CD4-positive, alpha-beta T cell (primary cell): ENCODE measurements at regions of chr18 and their contacts with region 1.

Region 1: DNA sequence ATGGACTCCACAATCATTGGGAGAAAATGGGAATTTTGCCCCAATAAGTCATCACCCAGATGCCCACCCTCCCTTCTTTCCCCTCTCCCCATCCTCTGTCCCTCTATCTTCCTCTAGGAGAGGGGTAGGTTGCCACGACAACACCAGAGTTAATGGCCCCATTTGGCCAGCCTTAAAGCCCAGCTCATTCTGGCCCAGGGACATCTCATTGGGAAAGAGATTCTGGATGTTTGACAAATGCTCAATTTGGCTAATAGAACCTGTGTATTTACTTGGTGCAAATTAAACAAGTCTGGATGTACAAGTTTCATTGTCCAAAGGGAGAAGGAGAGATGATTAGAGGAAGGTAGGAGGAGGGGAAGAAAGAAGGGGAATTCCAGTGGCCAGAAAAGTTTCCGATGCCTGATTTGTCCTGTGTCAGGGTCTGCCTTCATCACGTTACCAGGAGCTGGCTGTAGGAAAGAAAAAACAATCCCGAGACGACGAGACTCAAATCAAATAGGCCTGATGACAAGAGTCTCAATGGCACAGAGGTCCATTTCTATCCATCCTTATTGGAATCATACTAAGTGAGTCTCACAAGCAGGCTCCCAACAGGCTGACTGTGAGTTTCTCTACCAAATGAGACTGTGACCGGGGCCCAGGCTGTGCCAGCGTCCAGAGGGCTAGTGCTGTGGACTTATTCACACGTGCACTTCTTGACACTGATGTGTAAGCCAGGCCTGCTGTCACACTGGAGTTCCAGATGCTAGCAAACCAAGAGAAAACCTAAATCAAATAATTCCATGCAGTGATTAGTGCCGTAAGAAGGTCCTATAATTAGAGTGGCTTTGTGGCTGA is 265.2 kb upstream of the APCDD1 start:
- DNase-seq: no peak
- ATAC-seq: no peak
- H3K4me3 ChIP-seq: no peak overlapping the region
- H3K4me3 Mint-ChIP-seq: no peak overlapping the region
- H3K27ac ChIP-seq: no peak overlapping the region
- H3K27ac Mint-ChIP-seq: no peak overlapping the region
- H3K4me1 ChIP-seq: no peaks in the 10 kb centered on the region
- H3K4me1 Mint-ChIP-seq: no peaks in the 10 kb centered on the region
- H3K27me3 ChIP-seq: no peaks in the 10 kb centered on the region
- H3K27me3 Mint-ChIP-seq: no peaks in the 10 kb centered on the region
- CTCF ChIP-seq: no peak

Region 2: DNA sequence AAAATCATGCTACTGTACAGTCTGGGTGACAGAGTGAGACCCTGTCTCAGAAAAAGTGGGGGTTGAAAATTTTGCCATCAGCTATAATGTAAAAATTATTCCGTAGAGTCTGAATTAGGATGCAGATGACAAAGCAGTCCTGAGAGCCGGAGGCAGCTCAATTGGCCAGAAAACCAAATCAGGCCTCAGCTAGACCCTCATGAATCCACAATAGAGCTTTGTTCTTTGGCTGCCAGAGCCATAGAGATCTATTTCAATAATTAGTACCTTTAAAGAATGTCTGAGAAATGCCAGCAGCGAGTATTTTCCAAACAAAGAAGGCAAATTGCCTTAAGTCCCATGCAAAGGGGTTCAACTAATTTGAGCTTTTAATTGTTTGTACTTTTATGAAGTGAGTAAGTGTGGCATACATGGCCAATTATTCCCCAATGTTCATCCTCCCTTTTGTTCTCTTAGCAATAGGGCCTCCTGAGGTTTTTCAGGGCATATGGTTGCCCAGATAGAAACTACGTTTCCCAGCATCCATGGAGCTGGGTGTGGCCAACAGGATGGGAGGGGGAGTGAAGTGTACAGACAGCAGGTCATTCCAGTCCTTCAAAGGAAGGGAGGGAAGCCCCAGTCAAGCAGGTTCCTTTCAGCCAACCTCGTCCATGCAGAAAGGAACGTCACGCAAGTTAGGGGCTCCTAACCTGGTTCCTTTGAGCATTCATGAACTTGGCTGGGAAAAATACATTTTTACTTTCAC is 53.9 kb after region 1 on chr18:
- CTCF ChIA-PET with region 1: no interaction called
- POLR2A ChIA-PET with region 1: no interaction called
- intact Hi-C with region 1: loop called in 1 of 2 experiments (anchors 10 kb)
- DNase-seq: no peak
- ATAC-seq: no peak
- H3K4me3 ChIP-seq: no peak overlapping the region
- H3K4me3 Mint-ChIP-seq: no peak overlapping the region
- H3K27ac ChIP-seq: no peak overlapping the region
- H3K27ac Mint-ChIP-seq: no peak overlapping the region
- H3K4me1 ChIP-seq: no peaks in the 10 kb centered on the region
- H3K4me1 Mint-ChIP-seq: no peaks in the 10 kb centered on the region
- H3K27me3 ChIP-seq: no peaks in the 10 kb centered on the region
- H3K27me3 Mint-ChIP-seq: no peaks in the 10 kb centered on the region
- CTCF ChIP-seq: no peak